Adrenal gland (tissue), 19 donors: ENCODE measurements at regions of chr14 and their contacts with region 1.

Region 1: GRCh38 chr14:67166450-67166853 is 22.8 kb upstream of the GARIN2 start:
- DNase-seq: peak; percentile 29 to 76 (median 47)
- H3K4me3 ChIP-seq: no peak overlapping the region
- H3K27ac ChIP-seq: no peak overlapping the region
- H3K4me1 ChIP-seq: no peaks in the 10 kb centered on the region
- H3K27me3 ChIP-seq: no peaks in the 10 kb centered on the region
- CTCF ChIP-seq: peak; percentile 66 to 93 (median 81)
- POLR2A ChIP-seq: no peak

Region 2: GRCh38 chr14:66530526-66530925 is 635.9 kb before region 1 on chr14:
- intact Hi-C with region 1: no loop called
- DNase-seq: no peak
- H3K4me3 ChIP-seq: no peak overlapping the region
- H3K27ac ChIP-seq: no peak overlapping the region
- H3K4me1 ChIP-seq: no peaks in the 10 kb centered on the region
- H3K27me3 ChIP-seq: no peaks in the 10 kb centered on the region
- CTCF ChIP-seq: no peak
- POLR2A ChIP-seq: no peak

Region 3: DNA sequence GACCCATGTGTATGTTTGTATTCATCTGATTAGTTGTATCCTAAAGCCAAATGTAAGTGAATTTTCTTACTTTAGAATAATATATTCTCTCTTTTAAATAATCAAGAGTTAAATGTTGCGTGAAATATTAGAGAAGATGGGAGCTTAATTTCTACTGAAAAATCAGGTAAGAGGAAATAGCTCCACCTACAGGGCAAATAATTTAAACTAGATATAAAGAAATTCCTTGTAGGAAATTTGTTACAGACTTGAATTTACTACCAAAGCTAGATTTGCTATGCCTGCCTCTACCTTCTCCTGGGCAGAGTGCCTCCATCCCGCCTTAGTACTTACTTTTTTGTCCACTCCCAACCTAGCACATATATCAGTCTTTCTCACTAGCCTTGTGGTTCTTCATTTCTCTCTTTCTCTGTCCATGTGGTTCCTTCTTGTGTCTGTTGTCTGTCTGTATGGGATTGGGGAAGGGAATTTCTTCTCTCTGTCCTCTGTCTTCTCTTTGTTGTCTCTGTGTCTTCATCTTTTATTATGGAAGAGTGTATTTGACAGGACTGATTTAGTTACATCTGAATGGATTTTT is 119.5 kb after region 1 on chr14:
- intact Hi-C with region 1: loop called (anchors 2 to 10 kb)
- DNase-seq: no peak
- H3K4me3 ChIP-seq: no peak overlapping the region
- H3K27ac ChIP-seq: no peak overlapping the region
- H3K4me1 ChIP-seq: peaks cover 0 to 12% of the 10 kb centered on the region in 2 donors
- H3K27me3 ChIP-seq: no peaks in the 10 kb centered on the region
- CTCF ChIP-seq: peak; percentile 44 to 75 (median 58)
- POLR2A ChIP-seq: no peak